ENCODE measurements at regions of chr10 and their contacts with region 1.

Region 1: DNA sequence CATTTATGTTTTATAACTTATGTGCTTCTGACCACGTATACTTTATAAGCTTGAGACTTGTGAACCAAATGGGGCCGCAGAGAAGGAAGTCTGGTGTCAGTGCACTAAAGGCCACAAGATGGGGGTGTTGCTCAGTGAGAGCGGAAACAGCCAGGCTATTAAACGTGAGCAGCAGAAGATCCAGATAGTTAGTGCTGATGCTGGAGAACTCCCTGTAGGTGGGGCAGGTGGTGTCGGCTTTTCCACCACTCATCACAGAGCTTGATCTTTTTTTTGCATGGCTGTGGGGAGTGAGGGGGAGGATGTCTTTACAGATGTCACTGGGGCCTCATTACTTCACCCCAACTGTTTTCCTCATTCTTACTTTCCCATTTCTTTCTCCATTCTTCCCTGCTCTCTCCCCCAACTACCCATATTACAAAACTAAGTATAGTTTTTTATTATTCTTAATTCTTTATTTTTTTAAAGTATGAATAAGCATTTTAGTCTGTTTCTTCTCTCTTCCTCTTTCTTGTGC is 34.7 kb downstream of the ACADSB start:
- DNase-seq: peak; percentile 70
- ATAC-seq: peak; percentile 96
- H3K4me3 Mint-ChIP-seq: no peak overlapping the region
- H3K27ac Mint-ChIP-seq: no peak overlapping the region
- H3K4me1 Mint-ChIP-seq: peaks cover 10% of the 10 kb centered on the region
- H3K27me3 Mint-ChIP-seq: no peaks in the 10 kb centered on the region
- CTCF ChIP-seq: peak; percentile 64

Region 2: GRCh38 chr10:123117644-123118417 is 74.4 kb after region 1 on chr10:
- CTCF ChIA-PET with region 1: interaction called, 39 read pairs
- POLR2A ChIA-PET with region 1: interaction called, 4 read pairs
- DNase-seq: peak; percentile 80
- ATAC-seq: peak; percentile 97
- H3K4me3 Mint-ChIP-seq: peak overlapping the region; percentile 55
- H3K27ac Mint-ChIP-seq: no peak overlapping the region
- H3K4me1 Mint-ChIP-seq: peaks cover 19% of the 10 kb centered on the region
- H3K27me3 Mint-ChIP-seq: peaks cover 34% of the 10 kb centered on the region
- CTCF ChIP-seq: no peak

Region 3: GRCh38 chr10:123147635-123148413 is 104.4 kb after region 1 on chr10 and contains the start of gene HMX2:
- CTCF ChIA-PET with region 1: interaction called, 43 read pairs
- POLR2A ChIA-PET with region 1: no interaction called
- DNase-seq: peak; percentile 83
- ATAC-seq: peak; percentile 27
- H3K4me3 Mint-ChIP-seq: peak within 1 kb of the TSS; percentile 62
- H3K27ac Mint-ChIP-seq: no peak within 1 kb of the TSS
- H3K4me1 Mint-ChIP-seq: peaks cover 72% of the 10 kb centered on the region
- H3K27me3 Mint-ChIP-seq: peaks cover 94% of the 10 kb centered on the region
- CTCF ChIP-seq: no peak
- total RNA-seq, gene HMX2: 0.59 to 1.7 TPM (median 1.4 TPM) in 3 replicates

Region 4: GRCh38 chr10:123165445-123166072 is 122.1 kb after region 1 on chr10:
- CTCF ChIA-PET with region 1: interaction called, 10 read pairs
- POLR2A ChIA-PET with region 1: no interaction called
- DNase-seq: no peak
- ATAC-seq: peak; percentile 64
- H3K4me3 Mint-ChIP-seq: no peak overlapping the region
- H3K27ac Mint-ChIP-seq: no peak overlapping the region
- H3K4me1 Mint-ChIP-seq: no peaks in the 10 kb centered on the region
- H3K27me3 Mint-ChIP-seq: no peaks in the 10 kb centered on the region
- CTCF ChIP-seq: no peak

Region 5: DNA sequence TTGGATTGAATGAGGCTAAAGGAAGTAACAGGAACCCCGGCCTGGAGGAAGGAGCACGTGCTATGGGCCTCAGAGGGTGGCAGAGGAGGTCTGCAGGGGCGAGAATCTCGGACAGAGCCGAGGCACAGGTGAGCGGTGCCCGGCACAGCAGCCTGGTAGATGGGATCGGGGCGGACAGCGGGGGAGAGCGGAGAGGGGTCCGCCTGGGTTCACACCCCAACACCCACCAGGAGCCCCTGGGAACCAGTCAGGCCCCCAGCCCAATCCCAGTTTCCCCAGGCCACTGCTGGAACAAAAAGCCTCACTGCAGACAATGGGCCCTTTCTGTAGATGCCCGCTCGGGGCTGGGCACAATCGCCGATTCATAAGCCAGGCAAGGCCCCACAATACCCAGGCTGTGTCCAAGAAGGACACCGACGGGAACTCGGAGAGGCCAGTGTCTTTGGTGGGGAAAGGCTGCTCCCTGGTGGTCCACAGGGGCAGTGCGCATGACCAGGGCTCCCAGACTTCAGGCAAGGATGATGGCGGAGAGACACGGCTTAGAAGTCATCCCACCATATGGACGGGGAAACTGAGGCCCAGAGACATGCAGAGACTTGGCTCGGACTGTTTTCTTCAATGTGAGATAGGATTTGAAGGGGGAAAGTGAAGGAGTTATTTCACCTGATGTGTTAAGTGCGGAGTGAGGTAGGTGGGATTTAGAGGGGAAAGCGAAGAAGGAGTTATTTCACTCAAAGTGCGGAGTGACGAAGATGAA is 515.8 kb after region 1 on chr10:
- CTCF ChIA-PET with region 1: interaction called, 12 read pairs
- POLR2A ChIA-PET with region 1: no interaction called
- DNase-seq: peak; percentile 86
- ATAC-seq: peak; percentile 84
- H3K4me3 Mint-ChIP-seq: no peak overlapping the region
- H3K27ac Mint-ChIP-seq: no peak overlapping the region
- H3K4me1 Mint-ChIP-seq: peaks cover 11% of the 10 kb centered on the region
- H3K27me3 Mint-ChIP-seq: peaks cover 3% of the 10 kb centered on the region; the same call in 1 of the 2 replicates
- CTCF ChIP-seq: peak; percentile 99

Measured in WTC11 (cell line).